ENCODE measurements at regions of chr3 and their contacts with region 1.

Region 1: GRCh38 chr3:46538803-46539442 is 27.2 kb downstream of the LRRC2 start:
- DNase-seq: peak; percentile 70
- ATAC-seq: peak; percentile 86
- H3K4me3 Mint-ChIP-seq: peak overlapping the region; percentile 65
- H3K27ac Mint-ChIP-seq: peak overlapping the region; percentile 90
- H3K4me1 Mint-ChIP-seq: peaks cover 71% of the 10 kb centered on the region
- H3K27me3 Mint-ChIP-seq: peaks cover 2% of the 10 kb centered on the region
- CTCF ChIP-seq: no peak

Region 2: DNA sequence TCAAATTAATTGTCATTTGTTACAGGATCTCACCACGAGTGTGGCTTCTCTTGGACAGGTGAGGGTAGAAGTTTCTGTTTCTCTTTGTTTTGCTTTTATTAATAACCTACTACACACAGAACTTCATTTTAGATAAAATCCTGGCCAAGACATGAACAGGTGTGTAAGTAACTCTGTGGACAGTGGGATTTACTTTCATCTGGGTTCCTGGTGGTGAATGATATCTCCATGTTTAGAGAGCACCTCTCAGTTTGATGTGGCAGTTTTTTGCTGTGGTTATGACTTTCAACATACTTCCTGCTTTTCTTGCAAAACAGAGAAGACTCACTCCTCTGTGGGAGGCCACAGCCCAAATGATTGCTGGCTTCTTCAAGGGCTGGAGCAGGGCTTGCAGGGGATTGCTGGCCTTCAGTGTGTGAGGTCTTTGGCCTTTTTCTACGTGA is 440.6 kb before region 1 on chr3:
- CTCF ChIA-PET with region 1: no interaction called
- POLR2A ChIA-PET with region 1: interaction called, 3 read pairs
- intact Hi-C with region 1: loop called (anchors 1 kb)
- DNase-seq: no peak
- ATAC-seq: peak; percentile 32
- H3K4me3 Mint-ChIP-seq: peak overlapping the region; percentile 63
- H3K27ac Mint-ChIP-seq: peak overlapping the region; percentile 90
- H3K4me1 Mint-ChIP-seq: peaks cover 75% of the 10 kb centered on the region
- H3K27me3 Mint-ChIP-seq: no peaks in the 10 kb centered on the region
- CTCF ChIP-seq: no peak

Region 3: DNA sequence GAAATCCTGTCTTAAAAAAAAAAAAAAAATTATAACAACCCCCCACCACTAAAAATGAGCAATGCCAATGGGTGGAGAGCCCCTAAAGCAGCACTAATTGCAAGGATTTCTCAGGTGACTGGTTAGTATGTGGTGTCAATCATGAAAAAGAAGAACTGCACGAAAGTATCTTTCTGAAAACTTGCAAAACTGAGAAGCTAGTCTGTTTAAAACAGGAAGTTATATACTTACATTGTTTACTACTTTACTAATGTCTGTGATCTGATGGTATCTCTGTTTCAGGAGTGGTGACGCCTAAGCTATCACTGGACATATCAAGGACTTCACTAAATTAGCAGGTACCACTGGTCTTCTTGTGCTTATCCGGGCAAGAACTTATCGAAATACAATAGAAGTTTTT is 296.8 kb before region 1 on chr3 and contains the start of gene CCR3:
- CTCF ChIA-PET with region 1: no interaction called
- POLR2A ChIA-PET with region 1: no interaction called
- intact Hi-C with region 1: no loop called
- DNase-seq: no peak
- ATAC-seq: peak; percentile 56
- H3K4me3 Mint-ChIP-seq: peak within 1 kb of the TSS; percentile 16
- H3K27ac Mint-ChIP-seq: no peak within 1 kb of the TSS
- H3K4me1 Mint-ChIP-seq: peaks cover 11% of the 10 kb centered on the region
- H3K27me3 Mint-ChIP-seq: no peaks in the 10 kb centered on the region
- CTCF ChIP-seq: no peak
- total RNA-seq, gene CCR3: not detected in 2 replicates

Region 4: GRCh38 chr3:46488735-46489361 is 50.1 kb before region 1 on chr3:
- CTCF ChIA-PET with region 1: interaction called, 101 read pairs
- POLR2A ChIA-PET with region 1: interaction called, 23 read pairs
- intact Hi-C with region 1: loop called (anchors 1 kb)
- DNase-seq: peak; percentile 85
- ATAC-seq: peak; percentile 99
- H3K4me3 Mint-ChIP-seq: peak overlapping the region; percentile 29
- H3K27ac Mint-ChIP-seq: no peak overlapping the region
- H3K4me1 Mint-ChIP-seq: peaks cover 12% of the 10 kb centered on the region
- H3K27me3 Mint-ChIP-seq: peaks cover 2% of the 10 kb centered on the region
- CTCF ChIP-seq: peak; percentile 88

Region 5: DNA sequence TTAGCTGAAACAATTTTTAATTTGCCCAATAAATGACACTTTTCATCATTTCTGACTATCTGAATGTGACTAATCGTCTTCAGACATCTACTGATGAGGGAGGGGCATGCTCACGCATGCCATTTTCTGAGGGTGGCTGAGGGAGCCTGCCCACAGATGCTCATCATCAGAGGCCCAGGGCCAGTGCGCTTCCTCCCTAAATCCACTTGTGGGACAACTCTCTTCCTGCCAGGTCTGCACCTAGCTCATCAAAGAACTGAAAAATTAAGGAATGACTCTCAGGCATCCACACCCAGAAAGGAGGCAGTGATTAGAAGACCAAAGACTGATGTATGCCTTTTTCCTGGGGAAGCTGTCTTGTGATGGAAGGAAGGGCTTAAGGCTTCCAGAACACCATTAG is 18.4 kb before region 1 on chr3:
- CTCF ChIA-PET with region 1: no interaction called
- POLR2A ChIA-PET with region 1: no interaction called
- intact Hi-C with region 1: loop called (anchors 2 kb)
- DNase-seq: no peak
- ATAC-seq: no peak
- H3K4me3 Mint-ChIP-seq: no peak overlapping the region
- H3K27ac Mint-ChIP-seq: no peak overlapping the region
- H3K4me1 Mint-ChIP-seq: no peaks in the 10 kb centered on the region
- H3K27me3 Mint-ChIP-seq: no peaks in the 10 kb centered on the region
- CTCF ChIP-seq: no peak

Region 6: DNA sequence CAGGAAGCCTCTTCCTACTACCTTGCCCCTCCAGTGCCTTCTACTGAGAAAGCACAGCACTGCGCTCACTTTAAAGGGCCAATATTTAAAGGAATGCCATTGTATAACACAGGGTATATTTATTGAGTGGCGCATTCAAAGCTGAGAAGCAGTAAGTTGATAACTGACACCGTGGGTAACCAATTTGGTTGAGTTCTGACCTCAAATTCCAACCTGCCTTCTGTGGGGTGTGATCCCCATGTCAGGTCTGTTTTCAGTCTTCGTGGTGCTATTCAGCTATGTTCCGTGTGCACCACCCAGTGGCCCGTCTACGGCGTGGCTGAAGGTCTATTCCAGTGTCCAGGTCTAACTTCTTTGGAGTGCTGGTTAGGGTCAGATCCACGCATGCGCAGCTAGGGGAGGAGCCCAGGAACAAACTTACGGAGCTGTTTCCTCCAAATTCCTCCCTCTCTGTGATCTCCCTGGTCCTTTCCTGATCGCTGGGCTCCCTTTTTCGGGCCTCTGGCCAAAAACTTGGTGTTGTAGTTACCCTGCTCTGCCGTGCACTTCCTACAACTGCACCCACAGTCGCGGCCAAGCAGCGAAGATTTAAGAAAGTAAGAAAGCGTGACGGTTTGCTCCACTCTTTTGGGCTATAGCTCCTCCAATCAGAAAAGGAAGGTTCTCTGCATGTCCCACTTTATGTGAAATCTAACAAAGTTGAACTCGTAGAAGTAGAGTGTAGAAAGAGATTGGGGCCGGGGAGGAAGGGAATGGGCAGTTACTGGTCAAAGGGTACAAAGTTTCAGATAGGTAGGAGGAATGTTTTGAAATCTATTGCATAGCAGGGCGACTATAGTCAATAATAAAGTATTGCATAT is 19.5 kb after region 1 on chr3:
- CTCF ChIA-PET with region 1: interaction called, 35 read pairs
- POLR2A ChIA-PET with region 1: interaction called, 6 read pairs
- intact Hi-C with region 1: loop called (anchors 1 kb)
- DNase-seq: peak; percentile 50
- ATAC-seq: peak; percentile 98
- H3K4me3 Mint-ChIP-seq: peak overlapping the region; percentile 61
- H3K27ac Mint-ChIP-seq: no peak overlapping the region
- H3K4me1 Mint-ChIP-seq: peaks cover 20% of the 10 kb centered on the region
- H3K27me3 Mint-ChIP-seq: peaks cover 1% of the 10 kb centered on the region
- CTCF ChIP-seq: no peak

Region 7: GRCh38 chr3:46663591-46664135 is 124.7 kb after region 1 on chr3:
- CTCF ChIA-PET with region 1: no interaction called
- POLR2A ChIA-PET with region 1: no interaction called
- intact Hi-C with region 1: no loop called
- DNase-seq: no peak
- ATAC-seq: no peak
- H3K4me3 Mint-ChIP-seq: no peak overlapping the region
- H3K27ac Mint-ChIP-seq: no peak overlapping the region
- H3K4me1 Mint-ChIP-seq: peaks cover 8% of the 10 kb centered on the region
- H3K27me3 Mint-ChIP-seq: peaks cover 16% of the 10 kb centered on the region
- CTCF ChIP-seq: no peak

Region 8: GRCh38 chr3:47282424-47283192 is 743.7 kb after region 1 on chr3 and contains the starts of genes KIF9 and KLHL18:
- CTCF ChIA-PET with region 1: no interaction called
- POLR2A ChIA-PET with region 1: no interaction called
- intact Hi-C with region 1: loop called (anchors 2 kb)
- DNase-seq: peak; percentile 93
- ATAC-seq: peak; percentile 82
- H3K4me3 Mint-ChIP-seq: peak within 1 kb of the TSS; percentile 100
- H3K27ac Mint-ChIP-seq: peak within 1 kb of the TSS; percentile 99
- H3K4me1 Mint-ChIP-seq: peaks cover 53% of the 10 kb centered on the region
- H3K27me3 Mint-ChIP-seq: no peaks in the 10 kb centered on the region
- CTCF ChIP-seq: no peak
- total RNA-seq, gene KIF9: 2.3 and 2.5 TPM in 2 replicates
- total RNA-seq, gene KLHL18: 36.6 and 38.0 TPM in 2 replicates

Measured in activated B cell treated with CpG ODN at 0.5 μM for 24 hours (primary cell).